HEK293 (cell line): ENCODE measurements at regions of chr11 and their contacts with region 1.

Region 1: GRCh38 chr11:65382033-65382807 is at the start of gene SLC25A45:
- H3K4me3 ChIP-seq: peak within 1 kb of the TSS; percentile 24
- H3K27ac ChIP-seq: peak within 1 kb of the TSS; percentile 93
- H3K4me1 ChIP-seq: peaks cover 6% of the 10 kb centered on the region; the same call in 1 of the 2 replicates
- CTCF ChIP-seq: peak; percentile 98

Region 2: GRCh38 chr11:65301491-65302329 is 80.5 kb before region 1 on chr11:
- CTCF ChIA-PET with region 1: no interaction called
- POLR2A ChIA-PET with region 1: no interaction called
- H3K4me3 ChIP-seq: no peak overlapping the region
- H3K27ac ChIP-seq: no peak overlapping the region
- H3K4me1 ChIP-seq: 0 out of 2 replicates have a peak, but pooled peaks cover 3% of the 10 kb centered on the region
- CTCF ChIP-seq: no peak

Region 3: GRCh38 chr11:65366340-65366773 is 15.9 kb before region 1 on chr11:
- CTCF ChIA-PET with region 1: interaction called, 5 read pairs
- POLR2A ChIA-PET with region 1: interaction called, 10 read pairs
- H3K4me3 ChIP-seq: no peak overlapping the region
- H3K27ac ChIP-seq: no peak overlapping the region
- H3K4me1 ChIP-seq: no peaks in the 10 kb centered on the region
- CTCF ChIP-seq: peak; percentile 64